ENCODE measurements at regions of chr5 and their contacts with region 1.

Region 1: DNA sequence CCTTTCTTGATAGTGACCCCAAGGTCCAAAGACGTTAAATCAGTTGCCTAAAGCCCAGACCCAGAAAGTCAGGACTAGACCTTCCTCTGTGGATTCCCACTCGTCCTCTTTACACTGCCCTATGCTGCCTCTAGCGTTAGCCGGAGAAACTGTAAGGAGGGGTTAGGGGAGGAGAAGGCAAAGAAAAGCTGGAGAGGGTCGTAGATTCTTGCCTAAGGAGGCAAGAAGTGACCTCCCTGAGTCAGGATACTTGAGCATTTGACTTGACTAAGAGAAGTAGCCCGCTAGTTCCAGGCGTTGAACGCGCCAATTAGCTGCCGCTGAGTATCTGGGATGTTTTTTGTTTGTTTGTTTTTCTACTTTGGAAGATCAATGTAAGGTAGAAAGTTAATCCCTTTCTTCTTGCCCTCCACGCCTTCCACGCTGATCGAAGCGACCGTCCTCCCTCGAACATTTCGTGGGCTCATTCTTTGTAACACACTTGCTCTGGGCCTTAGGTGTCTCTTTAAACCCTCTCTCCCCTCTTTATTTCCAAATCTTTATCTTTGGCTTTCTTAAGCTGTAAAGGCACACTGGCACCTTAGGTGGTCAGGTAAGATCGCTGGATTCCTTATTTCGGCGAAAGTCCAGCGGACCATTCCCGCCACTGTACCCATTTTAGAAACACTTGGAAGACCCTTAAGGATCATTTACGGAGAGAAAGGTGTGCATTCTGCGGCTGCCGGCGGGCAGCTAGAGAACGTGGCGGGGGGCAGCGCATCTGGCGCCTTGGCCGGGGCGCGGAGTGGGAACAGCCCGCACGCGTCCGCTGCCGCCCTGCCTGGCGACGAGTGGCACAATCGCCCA is 5.1 kb upstream of the RGMB start:
- DNase-seq: peak in 4 of 5 donors; percentile 27 to 51 (median 43)
- ATAC-seq: peak in 3 of 4 donors; percentile 31 to 70 (median 59)
- H3K4me3 ChIP-seq: peak overlapping the region; percentile 55 to 90 (median 70)
- H3K27ac ChIP-seq: peak overlapping the region in 9 of 12 donors; percentile 36 to 79 (median 69)
- H3K4me1 ChIP-seq: peaks cover 0 to 54% (median 18%) of the 10 kb centered on the region in 12 donors
- H3K27me3 ChIP-seq: peaks cover 0 to 49% (median 0%) of the 10 kb centered on the region in 9 donors
- CTCF ChIP-seq: peak; percentile 62 to 91 (median 81)
- POLR2A ChIP-seq: no peak

Region 2: DNA sequence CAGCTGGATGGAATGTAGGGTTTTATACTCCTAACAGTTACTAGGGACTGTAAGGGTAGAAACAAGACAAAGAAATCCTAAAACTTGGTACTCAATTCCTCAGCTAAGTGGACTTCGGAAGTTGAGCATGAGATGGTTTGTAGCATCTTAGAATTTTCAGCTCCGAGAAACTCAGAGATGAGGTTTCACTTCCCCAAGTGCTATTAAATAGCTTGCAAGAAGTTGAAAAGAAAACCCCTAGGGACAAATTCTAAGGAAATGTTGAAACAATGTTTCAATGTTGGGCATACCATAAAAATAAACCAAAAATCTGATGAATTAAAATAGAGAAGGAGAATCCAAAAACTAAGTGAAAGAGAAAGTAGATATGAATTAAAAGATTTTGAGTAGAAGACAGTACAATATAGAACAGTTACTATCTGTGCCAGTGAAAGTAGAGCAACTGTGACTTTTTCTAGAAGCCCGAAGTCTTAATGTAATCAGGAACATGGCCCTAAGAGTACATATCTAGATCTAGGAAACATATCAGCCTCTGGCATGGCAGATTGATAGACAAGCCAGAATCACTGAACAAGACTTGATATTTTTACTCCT is 303.5 kb before region 1 on chr5:
- intact Hi-C with region 1: no loop called
- DNase-seq: no peak
- ATAC-seq: no peak
- H3K4me3 ChIP-seq: no peak overlapping the region
- H3K27ac ChIP-seq: no peak overlapping the region
- H3K4me1 ChIP-seq: no peaks in the 10 kb centered on the region
- H3K27me3 ChIP-seq: no peaks in the 10 kb centered on the region
- CTCF ChIP-seq: no peak
- POLR2A ChIP-seq: no peak

Region 3: GRCh38 chr5:98796197-98796972 is 28.0 kb after region 1 on chr5:
- intact Hi-C with region 1: loop called in 2 of 10 experiments (anchors 2 kb)
- DNase-seq: no peak
- ATAC-seq: peak; percentile 49 to 64 (median 60)
- H3K4me3 ChIP-seq: peak overlapping the region in 2 of 12 donors; percentile 21 to 28
- H3K27ac ChIP-seq: no peak overlapping the region
- H3K4me1 ChIP-seq: peaks cover 0 to 19% (median 7%) of the 10 kb centered on the region in 12 donors
- H3K27me3 ChIP-seq: no peaks in the 10 kb centered on the region
- CTCF ChIP-seq: peak; percentile 59 to 85 (median 76)
- POLR2A ChIP-seq: no peak

Region 4: DNA sequence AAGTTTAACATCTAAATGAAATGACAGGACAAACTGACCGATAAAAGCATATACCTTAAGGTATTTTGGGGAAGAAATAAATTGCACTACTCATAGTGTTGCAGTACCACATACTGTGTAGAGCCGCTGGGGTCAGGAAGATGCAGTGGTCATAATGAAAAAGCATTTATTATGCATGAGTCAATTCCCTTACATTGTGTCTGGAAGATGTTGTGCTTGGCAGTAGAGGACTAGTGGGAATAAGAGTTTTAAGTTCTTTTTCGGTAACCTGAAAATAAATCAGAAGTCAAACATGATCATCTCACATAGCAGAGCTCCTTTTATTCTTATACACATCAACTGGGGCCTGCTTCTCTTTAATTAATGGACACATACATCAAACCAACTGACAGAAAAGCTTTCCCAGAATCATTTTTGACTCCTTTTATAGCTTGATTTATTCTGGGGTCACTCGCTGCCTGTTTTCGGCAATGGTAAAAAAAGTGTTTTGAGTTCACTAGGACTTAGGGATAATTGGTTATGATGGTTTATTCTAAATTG is 422.9 kb after region 1 on chr5:
- intact Hi-C with region 1: no loop called
- DNase-seq: no peak
- ATAC-seq: no peak
- H3K4me3 ChIP-seq: no peak overlapping the region
- H3K27ac ChIP-seq: no peak overlapping the region
- H3K4me1 ChIP-seq: no peaks in the 10 kb centered on the region
- H3K27me3 ChIP-seq: peaks cover 0 to 4% (median 0%) of the 10 kb centered on the region in 9 donors
- CTCF ChIP-seq: no peak
- POLR2A ChIP-seq: no peak

Region 5: GRCh38 chr5:99651296-99651695 is 882.9 kb after region 1 on chr5:
- intact Hi-C with region 1: no loop called
- DNase-seq: no peak
- ATAC-seq: no peak
- H3K4me3 ChIP-seq: no peak overlapping the region
- H3K27ac ChIP-seq: no peak overlapping the region
- H3K4me1 ChIP-seq: no peaks in the 10 kb centered on the region
- H3K27me3 ChIP-seq: no peaks in the 10 kb centered on the region
- CTCF ChIP-seq: no peak
- POLR2A ChIP-seq: no peak